Right cardiac atrium (tissue), 5 donors: ENCODE measurements at regions of chr4 and their contacts with region 1.

Region 1: DNA sequence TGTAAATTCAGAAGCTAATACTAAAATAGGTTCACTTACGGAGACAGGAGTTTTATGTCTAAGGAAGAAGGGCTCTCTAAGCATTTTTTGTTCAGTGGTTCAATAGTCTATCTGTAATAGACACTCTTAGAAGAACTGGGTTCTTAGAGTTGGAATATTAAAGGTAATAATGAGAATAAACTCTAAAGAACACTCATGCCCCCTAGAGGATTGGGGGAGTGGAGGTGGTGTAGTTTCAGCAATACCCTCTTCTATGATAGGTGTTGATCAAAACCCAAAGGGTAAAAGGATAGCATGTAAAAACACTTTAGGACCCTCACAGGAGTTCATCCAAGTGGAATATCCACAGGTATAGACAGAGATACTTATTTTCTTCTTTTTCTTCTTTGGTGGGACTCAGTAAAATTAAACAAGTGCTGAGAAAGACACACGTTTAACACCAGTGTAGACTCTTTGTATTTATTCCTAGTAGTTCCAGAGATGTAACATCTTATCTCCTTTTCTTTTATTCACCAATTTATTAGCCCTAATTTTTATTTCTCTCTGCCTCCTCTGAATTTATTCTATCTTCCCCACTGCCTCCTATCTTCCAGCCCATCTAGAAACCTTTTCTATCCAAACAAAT is 25.7 kb upstream of the MND1 start:
- DNase-seq: no peak
- ATAC-seq: peak; percentile 68 to 79
- H3K4me3 ChIP-seq: no peak overlapping the region
- H3K27ac ChIP-seq: no peak overlapping the region
- H3K4me1 ChIP-seq: no peaks in the 10 kb centered on the region
- H3K27me3 ChIP-seq: no peaks in the 10 kb centered on the region

Region 2: GRCh38 chr4:152937336-152938236 is 381.2 kb before region 1 on chr4:
- intact Hi-C with region 1: no loop called
- DNase-seq: peak; percentile 31 to 78 (median 58)
- ATAC-seq: peak; percentile 64 to 80
- H3K4me3 ChIP-seq: peak overlapping the region; percentile 78
- H3K27ac ChIP-seq: no peak overlapping the region
- H3K4me1 ChIP-seq: peaks cover 4% of the 10 kb centered on the region
- H3K27me3 ChIP-seq: no peaks in the 10 kb centered on the region

Region 3: GRCh38 chr4:153142700-153143438 is 175.9 kb before region 1 on chr4:
- intact Hi-C with region 1: loop called (anchors 2 to 5 kb)
- DNase-seq: peak; percentile 78 to 90 (median 85)
- ATAC-seq: peak; percentile 86
- H3K4me3 ChIP-seq: peak overlapping the region; percentile 30
- H3K27ac ChIP-seq: no peak overlapping the region
- H3K4me1 ChIP-seq: peaks cover 2% of the 10 kb centered on the region
- H3K27me3 ChIP-seq: no peaks in the 10 kb centered on the region

Region 4: DNA sequence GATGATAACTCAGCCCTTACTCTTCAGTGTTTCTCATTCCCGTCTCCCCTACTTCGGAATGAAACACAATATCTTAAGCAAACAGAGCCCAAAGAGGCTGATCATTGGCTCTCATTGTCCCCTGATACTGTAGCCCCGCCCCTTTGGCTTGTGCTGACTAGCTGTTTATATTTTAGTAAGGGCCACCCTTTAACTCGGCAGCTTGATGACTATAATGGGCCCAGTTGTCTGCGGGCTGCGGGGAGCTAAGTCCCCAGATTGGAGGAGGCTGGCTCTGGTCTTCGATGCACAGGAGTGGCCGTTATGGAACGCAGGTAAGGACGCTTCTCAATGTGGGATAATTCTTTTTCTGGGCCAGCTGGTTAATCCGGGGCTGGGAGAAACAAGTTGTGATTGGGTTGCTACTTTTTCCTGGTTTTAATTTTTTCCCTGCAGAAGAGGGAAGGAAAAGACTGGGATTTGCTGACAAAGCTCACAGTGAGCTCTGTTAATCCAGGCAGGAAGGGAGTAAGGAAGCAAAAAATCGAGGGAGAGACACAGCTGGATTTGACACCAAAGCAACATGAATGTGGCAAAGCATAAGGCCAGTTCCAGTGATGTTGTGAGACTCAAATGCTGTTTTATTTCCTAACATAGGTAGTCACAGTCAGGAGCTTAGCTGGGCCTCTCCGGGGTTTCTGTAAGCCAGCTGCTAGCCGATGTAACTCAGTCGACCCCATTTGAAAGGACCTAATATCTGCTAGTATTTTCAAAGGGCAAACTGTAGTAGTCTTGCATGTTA is 114.4 kb before region 1 on chr4 and contains the start of gene TRIM2:
- intact Hi-C with region 1: loop called in 2 of 4 experiments (anchors 2 to 5 kb)
- DNase-seq: peak; percentile 80 to 91 (median 81)
- ATAC-seq: peak; percentile 93 to 94
- H3K4me3 ChIP-seq: peak within 1 kb of the TSS; percentile 31
- H3K27ac ChIP-seq: peak within 1 kb of the TSS; percentile 46
- H3K4me1 ChIP-seq: peaks cover 4% of the 10 kb centered on the region
- H3K27me3 ChIP-seq: no peaks in the 10 kb centered on the region
- total RNA-seq, gene TRIM2: 28.0 to 45.3 (median 31.0) TPM

Region 5: GRCh38 chr4:153211986-153212729 is 106.7 kb before region 1 on chr4:
- intact Hi-C with region 1: loop called in 3 of 4 experiments (anchors 2 to 10 kb)
- DNase-seq: no peak
- ATAC-seq: no peak
- H3K4me3 ChIP-seq: no peak overlapping the region
- H3K27ac ChIP-seq: no peak overlapping the region
- H3K4me1 ChIP-seq: no peaks in the 10 kb centered on the region
- H3K27me3 ChIP-seq: no peaks in the 10 kb centered on the region